ENCODE measurements at regions of chr3 and their contacts with region 1.

Region 1: GRCh38 chr3:38651154-38651789 is 1.8 kb upstream of the SCN5A start:
- DNase-seq: peak; percentile 15
- H3K4me3 ChIP-seq: no peak overlapping the region
- CTCF ChIP-seq: peak; percentile 99

Region 2: GRCh38 chr3:38507120-38507519 is 144.2 kb before region 1 on chr3:
- in situ Hi-C with region 1: loop called (anchors 5 kb)
- DNase-seq: no peak
- H3K4me3 ChIP-seq: no peak overlapping the region
- CTCF ChIP-seq: no peak

Region 3: GRCh38 chr3:38556640-38557358 is 94.5 kb before region 1 on chr3:
- in situ Hi-C with region 1: loop called (anchors 5 kb)
- DNase-seq: no peak
- H3K4me3 ChIP-seq: no peak overlapping the region
- CTCF ChIP-seq: no peak

Region 4: GRCh38 chr3:38689774-38690173 is 38.5 kb after region 1 on chr3:
- in situ Hi-C with region 1: no loop called
- DNase-seq: no peak
- H3K4me3 ChIP-seq: no peak overlapping the region
- CTCF ChIP-seq: no peak

Region 5: DNA sequence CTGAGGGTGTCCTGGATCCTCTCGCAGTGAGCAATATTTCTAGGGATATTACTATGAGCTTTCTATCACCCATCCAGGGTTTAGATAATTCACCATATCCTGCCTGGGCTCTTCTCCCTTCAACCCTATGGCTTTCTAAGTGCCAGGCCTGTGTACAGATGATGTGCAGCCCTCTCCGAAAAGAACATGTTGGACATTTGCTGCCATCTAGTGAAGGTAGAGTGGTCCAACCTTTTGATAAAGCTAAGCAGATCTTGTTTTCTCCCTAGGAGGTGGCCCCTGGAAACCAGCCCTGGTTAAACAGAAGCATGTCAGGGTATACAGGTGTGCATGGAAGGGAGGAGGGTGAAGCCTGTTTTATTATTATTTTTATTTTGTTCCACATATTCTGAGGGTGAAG is 192.6 kb after region 1 on chr3:
- in situ Hi-C with region 1: loop called (anchors 10 kb)
- DNase-seq: peak; percentile 48
- H3K4me3 ChIP-seq: no peak overlapping the region
- CTCF ChIP-seq: peak; percentile 60

Measured in astrocyte of the cerebellum (primary cell).